Right ventricle myocardium superior (tissue), 1 donor: ENCODE measurements at regions of chr6 and their contacts with region 1.

Region 1: GRCh38 chr6:12605888-12606345 is 110.7 kb upstream of the PHACTR1 start:
- DNase-seq: no peak
- ATAC-seq: peak; percentile 84

Region 2: DNA sequence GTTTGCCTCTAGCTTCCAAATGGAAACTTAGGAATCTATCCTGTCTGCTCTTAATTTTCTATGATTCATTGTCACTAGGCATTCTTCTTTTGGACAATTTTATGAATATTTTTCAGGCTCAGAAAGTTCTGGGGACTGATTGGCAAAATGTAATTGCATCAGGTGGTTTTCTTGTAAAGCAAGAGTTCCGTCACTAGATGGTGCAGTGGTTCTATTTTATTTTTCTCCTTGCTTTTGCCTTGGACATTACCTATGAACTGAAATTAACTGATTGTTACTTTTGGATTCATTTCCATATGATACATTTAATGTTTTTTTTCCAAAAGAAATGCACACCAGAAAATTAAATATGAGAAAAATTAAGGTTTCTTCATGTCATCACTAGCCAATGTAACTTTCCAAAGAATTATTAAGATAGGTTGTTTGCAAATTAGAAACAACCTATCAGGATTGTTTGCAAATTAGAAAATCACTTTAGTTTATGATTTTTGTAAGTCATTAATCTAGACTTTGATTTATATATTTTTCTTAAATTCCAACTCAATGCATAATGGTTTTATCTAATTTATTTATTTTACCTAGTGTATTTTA is 1020.4 kb before region 1 on chr6:
- intact Hi-C with region 1: loop called (anchors 10 kb)
- DNase-seq: no peak
- ATAC-seq: no peak

Region 3: DNA sequence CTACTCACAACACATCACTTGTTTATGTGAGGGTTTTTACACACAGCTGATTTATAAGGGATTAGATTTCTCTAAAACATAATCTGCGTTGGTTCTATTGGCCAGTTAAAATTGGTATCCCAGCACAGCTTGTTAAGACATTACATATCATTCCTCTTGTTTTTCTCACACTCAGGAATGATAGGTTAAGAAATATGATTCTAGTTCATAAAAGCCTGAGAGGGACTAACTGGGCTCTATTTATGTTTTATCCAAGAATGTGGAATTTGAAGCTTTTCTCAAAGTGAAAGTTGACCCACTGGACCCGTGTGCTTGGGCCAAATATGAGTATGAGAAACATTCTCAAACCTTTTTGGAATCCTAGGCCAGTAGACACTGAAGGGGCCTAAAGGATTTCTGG is 951.0 kb before region 1 on chr6:
- intact Hi-C with region 1: loop called (anchors 5 kb)
- DNase-seq: no peak
- ATAC-seq: no peak

Region 4: DNA sequence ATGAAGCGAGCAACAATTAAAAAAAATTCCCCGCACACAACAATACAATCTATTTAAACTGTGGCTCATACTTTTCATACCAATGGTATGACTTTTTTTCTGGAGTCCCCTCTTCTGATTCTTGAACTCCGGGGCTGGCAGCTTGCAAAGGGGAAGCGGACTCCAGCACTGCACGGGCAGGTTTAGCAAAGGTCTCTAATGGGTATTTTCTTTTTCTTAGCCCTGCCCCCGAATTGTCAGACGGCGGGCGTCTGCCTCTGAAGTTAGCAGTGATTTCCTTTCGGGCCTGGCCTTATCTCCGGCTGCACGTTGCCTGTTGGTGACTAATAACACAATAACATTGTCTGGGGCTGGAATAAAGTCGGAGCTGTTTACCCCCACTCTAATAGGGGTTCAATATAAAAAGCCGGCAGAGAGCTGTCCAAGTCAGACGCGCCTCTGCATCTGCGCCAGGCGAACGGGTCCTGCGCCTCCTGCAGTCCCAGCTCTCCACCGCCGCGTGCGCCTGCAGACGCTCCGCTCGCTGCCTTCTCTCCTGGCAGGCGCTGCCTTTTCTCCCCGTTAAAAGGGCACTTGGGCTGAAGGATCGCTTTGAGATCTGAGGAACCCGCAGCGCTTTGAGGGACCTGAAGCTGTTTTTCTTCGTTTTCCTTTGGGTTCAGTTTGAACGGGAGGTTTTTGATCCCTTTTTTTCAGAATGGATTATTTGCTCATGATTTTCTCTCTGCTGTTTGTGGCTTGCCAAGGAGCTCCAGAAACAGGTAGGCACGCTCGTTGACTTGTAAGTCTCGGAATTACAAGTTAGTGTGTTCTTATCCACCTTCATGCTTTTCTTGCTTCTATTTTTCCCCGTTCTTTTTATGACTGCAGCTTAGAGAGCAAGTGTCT is 315.7 kb before region 1 on chr6 and contains the start of gene EDN1:
- intact Hi-C with region 1: loop called (anchors 5 kb)
- DNase-seq: peak; percentile 85
- ATAC-seq: peak; percentile 95
- total RNA-seq, gene EDN1: 2.2 TPM

Region 5: GRCh38 chr6:12395898-12396297 is 210.0 kb before region 1 on chr6:
- intact Hi-C with region 1: loop called (anchors 10 kb)
- DNase-seq: no peak
- ATAC-seq: no peak

Region 6: DNA sequence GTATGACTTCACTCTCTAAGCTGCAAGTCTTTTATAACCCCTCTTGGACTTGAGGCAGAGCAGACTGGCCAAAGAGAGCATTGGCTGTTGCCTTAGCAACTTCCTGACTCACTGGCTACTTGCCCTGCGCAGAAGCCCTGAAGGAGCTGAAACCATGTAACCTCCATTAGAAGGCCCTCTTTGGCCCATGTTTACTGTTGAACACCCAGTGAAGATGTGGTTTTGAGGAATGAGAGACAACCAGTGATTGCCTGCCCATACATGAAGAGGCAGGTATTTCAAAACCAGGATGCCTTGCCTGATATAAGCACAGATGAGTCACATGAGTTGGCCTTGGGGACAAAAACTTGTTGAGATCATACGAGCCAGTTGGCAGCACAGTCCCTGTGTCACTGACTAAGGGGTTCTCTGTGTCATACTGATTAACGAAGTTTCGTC is 133.3 kb before region 1 on chr6:
- intact Hi-C with region 1: no loop called
- DNase-seq: peak; percentile 65
- ATAC-seq: peak; percentile 78